Activated CD4-positive, alpha-beta memory T cell treated with anti-CD3 and anti-CD28 coated beads, Interleukin-2, amount 10 ng/mL, durations not matched to agents 7 days and 5 days (primary cell): ENCODE measurements at regions of chr12 and their contacts with region 1.

Region 1: GRCh38 chr12:9940375-9940774 is 8.2 kb upstream of the CLEC2A start:
- DNase-seq: no peak
- H3K4me3 Mint-ChIP-seq: no peak overlapping the region
- H3K27ac Mint-ChIP-seq: no peak overlapping the region
- H3K4me1 Mint-ChIP-seq: peaks cover 15% of the 10 kb centered on the region
- H3K27me3 Mint-ChIP-seq: peaks cover 34% of the 10 kb centered on the region

Region 2: DNA sequence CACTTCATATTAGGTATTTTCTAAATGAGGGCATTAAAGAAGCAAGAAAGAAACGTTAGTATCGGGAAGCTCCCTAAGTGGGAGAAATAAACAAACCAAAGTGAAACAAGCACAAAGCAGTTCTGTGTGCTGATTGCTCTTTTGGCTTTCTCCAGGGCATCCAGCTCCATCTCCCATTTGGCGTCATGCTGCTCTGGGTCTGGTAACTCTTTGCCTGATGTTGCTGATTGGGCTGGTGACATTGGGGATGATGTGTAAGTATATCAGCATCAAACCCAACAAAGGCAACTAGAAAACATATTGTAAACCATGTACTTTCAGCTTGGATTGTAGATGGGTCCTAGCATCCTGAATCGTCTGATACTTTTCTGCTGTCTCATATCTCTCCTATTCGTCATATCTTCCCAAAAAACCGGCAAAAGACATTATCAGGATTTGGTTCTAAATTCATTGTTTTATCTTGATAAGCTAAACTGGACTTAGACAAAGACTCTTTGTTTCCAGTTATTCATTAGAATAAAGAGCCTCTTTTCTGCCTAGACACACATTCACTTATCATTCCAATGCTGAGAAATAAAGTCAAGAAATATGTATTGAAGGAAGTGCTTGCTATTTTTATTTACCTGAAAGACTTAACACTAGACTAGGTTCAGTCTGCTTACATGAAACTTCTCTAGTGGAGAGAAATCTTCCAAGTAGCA is 72.4 kb after region 1 on chr12:
- CTCF ChIA-PET with region 1: interaction called, 11 read pairs
- POLR2A ChIA-PET with region 1: no interaction called
- DNase-seq: no peak
- H3K4me3 Mint-ChIP-seq: no peak overlapping the region
- H3K27ac Mint-ChIP-seq: no peak overlapping the region
- H3K4me1 Mint-ChIP-seq: no peaks in the 10 kb centered on the region
- H3K27me3 Mint-ChIP-seq: peaks cover 33% of the 10 kb centered on the region

Region 3: GRCh38 chr12:10033783-10034545 is 93.6 kb after region 1 on chr12:
- CTCF ChIA-PET with region 1: no interaction called
- POLR2A ChIA-PET with region 1: no interaction called
- DNase-seq: no peak
- H3K4me3 Mint-ChIP-seq: no peak overlapping the region
- H3K27ac Mint-ChIP-seq: no peak overlapping the region
- H3K4me1 Mint-ChIP-seq: no peaks in the 10 kb centered on the region
- H3K27me3 Mint-ChIP-seq: peaks cover 11% of the 10 kb centered on the region